Left colon (tissue), 2 donors: ENCODE measurements at regions of chr6 and their contacts with region 1.

Region 1: GRCh38 chr6:5827056-5827904 is 179.4 kb downstream of the NRN1 start:
- DNase-seq: no peak
- ATAC-seq: no peak

Region 2: DNA sequence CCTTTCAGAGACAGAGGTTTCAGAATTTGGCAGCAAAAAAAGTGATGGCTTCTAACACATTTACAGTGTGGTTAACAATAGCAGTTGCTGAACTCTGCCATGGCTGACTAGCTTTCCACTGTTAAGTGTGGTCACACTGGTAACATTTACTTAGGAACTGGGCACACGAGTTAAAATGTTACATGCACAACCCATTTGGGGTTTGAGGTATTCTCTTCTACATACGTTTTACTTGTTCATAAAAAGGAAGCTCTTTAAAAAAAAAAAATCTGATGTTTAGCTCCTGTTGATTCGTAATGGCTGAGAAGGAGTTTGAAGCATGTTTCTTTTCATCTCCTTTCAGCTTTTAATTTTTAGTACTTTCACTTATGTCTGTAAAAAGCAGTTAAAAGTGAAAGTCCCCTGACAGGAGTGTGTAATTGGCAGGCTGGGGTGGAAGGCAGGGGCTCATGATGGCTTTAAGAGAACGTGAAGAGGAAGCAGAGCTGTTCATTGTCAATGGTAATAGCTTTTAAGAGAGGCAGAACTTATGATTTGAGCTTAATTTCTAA is 320.1 kb before region 1 on chr6:
- intact Hi-C with region 1: no loop called
- DNase-seq: no peak
- ATAC-seq: no peak

Region 3: DNA sequence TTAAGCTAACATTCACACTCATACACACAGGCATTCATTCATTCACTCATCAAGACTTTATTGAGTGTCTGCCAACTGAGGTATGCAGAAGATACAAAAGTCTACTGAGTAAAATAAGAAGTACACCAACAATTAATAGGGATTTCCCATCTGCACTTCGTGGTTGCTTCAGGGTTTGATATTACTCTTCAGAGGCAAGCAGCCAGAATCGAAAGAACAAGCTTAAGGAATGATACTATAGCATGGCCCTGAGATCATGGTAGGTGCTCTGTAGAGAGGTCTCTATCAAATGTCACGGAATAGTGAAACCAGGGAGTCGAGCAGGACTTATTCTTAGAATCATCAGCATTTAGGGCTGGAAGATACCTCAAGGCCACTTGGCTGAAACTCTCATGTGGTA is 44.0 kb after region 1 on chr6:
- intact Hi-C with region 1: loop called in 1 of 2 experiments (anchors 5 kb)
- DNase-seq: no peak
- ATAC-seq: no peak

Region 4: GRCh38 chr6:6152060-6152459 is 324.8 kb after region 1 on chr6:
- intact Hi-C with region 1: no loop called
- DNase-seq: no peak
- ATAC-seq: peak; percentile 42